GM10248 (cell line): ENCODE measurements at regions of chr6 and their contacts with region 1.

Region 1: DNA sequence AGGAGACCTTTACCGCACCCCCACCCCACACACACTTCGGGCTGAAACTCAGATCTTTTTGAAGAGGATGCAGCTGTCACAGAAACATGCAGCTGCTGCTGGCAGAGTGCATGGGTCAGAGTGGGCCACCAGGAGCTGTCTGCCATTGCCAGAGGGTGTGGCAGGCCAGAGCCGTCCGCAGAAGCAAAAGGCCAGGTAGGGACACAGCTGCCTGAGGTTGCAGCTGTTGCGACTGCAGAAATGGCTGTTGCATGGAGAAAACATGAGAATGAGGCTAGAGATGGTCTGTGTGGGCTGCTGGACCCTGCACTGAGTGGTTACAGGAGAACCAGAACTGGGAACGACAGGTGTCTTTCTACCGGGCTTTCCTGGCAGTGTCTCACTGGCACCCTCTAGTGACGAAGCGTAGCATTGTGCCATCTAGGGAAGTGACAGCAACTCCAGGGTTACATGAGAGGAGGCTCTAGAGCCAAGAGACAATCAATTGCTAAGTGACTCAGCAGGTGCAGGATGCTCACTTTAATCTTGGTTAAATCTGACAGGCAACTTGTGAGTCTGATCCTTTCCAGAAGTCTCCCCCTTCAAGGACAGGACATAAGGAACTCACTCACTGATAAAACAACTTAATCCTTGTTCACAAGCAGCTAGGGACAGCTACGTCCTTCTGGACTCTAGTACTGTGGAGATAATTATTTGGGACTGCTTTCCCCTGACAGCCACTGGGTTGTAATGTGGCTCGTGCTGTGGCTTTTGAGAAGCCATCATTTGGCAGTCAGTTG is 29.1 kb upstream of the SERPINB9 start:
- DNase-seq: peak; percentile 86
- CTCF ChIP-seq: peak; percentile 96

Region 2: DNA sequence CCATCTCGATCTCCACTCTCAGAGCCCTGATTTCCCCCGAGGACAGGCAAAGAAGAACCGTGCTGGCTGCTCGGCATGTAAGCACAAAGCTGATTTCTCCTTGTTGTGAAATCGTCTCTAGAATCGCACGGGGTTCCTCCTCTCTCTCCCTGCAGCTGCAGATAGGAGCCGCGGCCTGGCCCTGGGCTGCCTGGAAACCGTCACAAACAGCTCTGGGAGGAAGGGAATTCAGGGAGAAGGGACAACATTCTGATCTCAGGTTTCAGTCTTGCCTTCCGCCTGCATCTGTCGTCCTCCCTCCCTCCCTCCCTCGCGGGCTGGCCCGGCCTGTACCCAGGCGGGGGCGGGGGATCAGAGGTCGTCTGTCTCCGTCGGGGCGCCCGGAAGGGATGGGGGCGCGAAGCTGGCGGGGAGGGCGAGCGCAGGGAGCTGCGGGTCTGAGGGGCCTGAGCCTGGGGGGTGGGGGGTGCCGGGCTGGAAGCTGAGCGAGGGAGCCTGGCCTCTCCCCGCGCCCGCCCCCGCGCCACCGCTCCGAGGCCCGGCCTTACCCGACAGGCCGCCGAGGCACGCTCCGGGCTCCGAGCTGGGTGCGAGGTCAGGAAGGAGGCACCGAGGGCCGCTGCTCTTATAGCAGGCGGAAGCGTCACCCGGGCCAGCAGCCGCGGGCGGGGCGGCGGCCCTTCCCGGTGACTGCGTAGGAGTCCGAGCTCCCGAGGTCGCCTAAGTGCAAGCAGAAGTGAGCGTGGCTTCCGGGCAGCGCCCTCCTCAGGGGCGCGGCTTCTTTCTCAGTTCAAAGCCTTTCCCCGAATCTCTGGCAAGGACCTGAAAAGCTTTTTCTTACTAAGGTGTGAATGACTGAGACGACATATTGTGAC is 90.7 kb before region 1 on chr6 and contains the start of gene SERPINB1:
- CTCF ChIA-PET with region 1: interaction called, 149 read pairs
- POLR2A ChIA-PET with region 1: interaction called, 9 read pairs
- DNase-seq: peak; percentile 81
- CTCF ChIP-seq: peak; percentile 14

Region 3: DNA sequence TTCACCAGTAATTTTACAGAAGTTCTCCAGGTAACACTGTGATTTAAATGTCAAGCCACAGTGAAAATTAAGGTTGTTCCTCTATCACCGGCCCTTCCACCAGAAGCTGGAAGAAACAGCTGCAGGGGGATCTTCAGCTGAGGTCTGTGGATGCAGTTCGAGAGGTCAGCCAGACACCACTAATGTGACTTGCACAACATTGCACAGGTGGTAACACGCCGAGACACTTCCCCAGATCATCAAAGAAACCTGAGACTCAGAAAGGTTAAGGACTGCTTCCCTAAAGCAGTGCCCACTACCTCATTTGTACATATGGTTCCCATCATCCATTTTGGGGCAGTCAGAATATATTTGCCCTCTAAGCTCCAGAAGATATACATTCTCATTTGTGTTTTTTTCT is 21.0 kb before region 1 on chr6:
- CTCF ChIA-PET with region 1: interaction called, 18 read pairs
- POLR2A ChIA-PET with region 1: interaction called, 3 read pairs
- DNase-seq: no peak
- CTCF ChIP-seq: no peak

Region 4: DNA sequence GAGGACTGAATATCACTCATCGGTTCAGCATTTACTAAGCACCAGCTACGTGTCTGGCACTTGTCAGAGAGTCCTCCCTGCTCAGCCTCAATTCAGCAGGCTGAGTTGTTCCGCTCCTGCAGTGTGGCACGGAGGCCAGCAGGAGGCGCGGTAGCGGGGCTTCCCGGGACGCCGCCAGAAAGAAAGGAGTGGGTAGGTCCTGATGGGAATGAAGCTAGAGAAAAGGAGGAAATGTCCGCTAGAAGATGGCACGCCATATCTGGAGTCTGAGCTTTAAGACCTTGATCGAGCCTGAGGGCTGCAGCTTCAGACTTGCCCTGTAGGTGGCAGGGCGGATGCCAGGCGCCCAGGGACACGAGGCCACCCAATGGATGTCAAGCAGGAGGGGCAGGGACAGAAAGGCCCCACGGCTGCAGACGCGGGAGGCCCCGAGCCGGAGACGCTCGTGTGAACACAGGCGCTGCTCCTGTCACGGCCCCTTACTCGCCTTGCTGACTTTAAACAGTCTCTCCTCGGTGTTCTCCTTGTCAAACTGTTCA is 20.5 kb after region 1 on chr6:
- CTCF ChIA-PET with region 1: interaction called, 72 read pairs
- POLR2A ChIA-PET with region 1: interaction called, 5 read pairs
- DNase-seq: peak; percentile 50
- CTCF ChIP-seq: peak; percentile 62

Region 5: GRCh38 chr6:3063733-3064700 is 131.9 kb after region 1 on chr6:
- CTCF ChIA-PET with region 1: interaction called, 7 read pairs
- POLR2A ChIA-PET with region 1: interaction called, 14 read pairs
- DNase-seq: peak; percentile 92
- CTCF ChIP-seq: no peak